Posterior vena cava (tissue), 2 donors: ENCODE measurements at regions of chr4 and their contacts with region 1.

Region 1: DNA sequence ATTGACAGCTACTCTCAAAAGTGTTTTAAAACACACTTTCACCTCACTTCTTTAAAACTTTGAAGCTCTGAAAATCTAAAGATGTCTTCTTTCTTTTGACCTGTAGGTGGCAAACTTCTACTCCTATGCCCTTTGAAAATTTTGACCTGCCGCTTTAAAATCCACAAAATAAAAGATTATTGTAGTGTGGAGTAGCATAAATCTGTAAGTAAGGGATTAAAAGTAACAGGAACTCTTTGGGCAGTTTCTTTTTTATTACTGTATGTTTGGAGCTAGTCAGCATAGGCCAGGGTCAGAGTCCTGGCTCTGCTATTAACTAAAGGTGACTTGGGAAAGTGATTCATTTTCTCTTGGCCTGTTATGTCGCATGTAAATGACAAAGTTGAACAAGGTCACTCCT is 25.5 kb downstream of the BBS12 start:
- DNase-seq: no peak

Region 2: DNA sequence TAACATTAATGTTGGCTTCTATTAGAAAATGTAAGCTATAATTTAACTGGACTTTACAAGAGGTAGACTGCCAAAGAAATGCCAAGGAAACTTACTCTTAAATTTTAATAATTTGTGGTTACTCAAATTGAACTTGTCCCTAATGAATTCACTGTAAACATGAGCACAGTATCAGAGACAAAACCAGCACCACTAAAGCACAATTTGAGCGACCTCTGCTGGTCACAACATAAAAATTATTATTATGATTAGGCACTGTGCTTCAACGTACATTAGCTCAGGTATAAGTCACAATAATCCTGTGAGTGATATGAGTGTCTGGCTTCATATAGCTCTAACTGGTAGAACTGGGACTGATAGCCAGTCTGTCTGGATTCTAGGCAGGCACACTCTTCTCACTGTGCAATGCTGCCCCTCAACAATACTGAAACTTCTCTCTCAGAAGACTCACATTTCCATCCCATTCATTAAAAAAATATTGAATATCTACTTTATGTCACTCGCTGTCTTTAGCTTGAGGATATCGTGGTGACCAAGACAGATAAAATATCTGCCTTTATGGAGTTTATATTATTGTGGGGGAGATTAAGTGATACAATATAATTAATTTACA is 156.4 kb after region 1 on chr4:
- intact Hi-C with region 1: loop called in 1 of 2 experiments (anchors 5 kb)
- DNase-seq: no peak

Region 3: DNA sequence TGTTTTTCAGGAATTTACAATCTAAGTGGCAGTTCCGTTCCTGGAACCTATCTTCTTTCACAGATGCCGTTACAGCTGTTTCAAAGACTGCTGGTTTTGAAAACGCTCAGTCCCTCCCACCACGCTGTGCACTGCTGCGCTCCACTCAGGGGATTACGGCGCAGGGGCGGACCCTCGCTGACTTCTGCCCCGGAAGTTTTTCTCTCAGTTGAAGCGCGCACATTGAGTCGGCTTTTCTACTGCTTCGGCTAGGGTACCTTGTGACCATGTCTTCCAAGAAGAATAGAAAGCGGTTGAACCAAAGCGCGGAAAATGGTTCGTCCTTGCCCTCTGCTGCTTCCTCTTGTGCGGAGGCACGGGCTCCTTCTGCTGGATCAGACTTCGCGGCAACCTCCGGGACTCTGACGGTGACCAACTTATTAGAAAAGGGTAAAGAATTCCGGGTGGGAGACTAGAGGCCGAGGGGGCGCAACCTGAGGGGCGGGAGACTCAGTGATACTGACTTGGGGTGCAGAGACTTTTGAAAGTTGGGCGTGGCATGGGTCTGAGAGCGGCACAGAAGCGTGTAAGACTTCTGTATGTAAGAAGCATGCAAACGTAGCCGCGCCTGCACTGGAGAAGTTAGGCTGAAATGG is 165.0 kb after region 1 on chr4:
- intact Hi-C with region 1: loop called in 1 of 2 experiments (anchors 10 kb)
- DNase-seq: peak; percentile 94